ENCODE measurements at regions of chr12 and their contacts with region 1.

Region 1: DNA sequence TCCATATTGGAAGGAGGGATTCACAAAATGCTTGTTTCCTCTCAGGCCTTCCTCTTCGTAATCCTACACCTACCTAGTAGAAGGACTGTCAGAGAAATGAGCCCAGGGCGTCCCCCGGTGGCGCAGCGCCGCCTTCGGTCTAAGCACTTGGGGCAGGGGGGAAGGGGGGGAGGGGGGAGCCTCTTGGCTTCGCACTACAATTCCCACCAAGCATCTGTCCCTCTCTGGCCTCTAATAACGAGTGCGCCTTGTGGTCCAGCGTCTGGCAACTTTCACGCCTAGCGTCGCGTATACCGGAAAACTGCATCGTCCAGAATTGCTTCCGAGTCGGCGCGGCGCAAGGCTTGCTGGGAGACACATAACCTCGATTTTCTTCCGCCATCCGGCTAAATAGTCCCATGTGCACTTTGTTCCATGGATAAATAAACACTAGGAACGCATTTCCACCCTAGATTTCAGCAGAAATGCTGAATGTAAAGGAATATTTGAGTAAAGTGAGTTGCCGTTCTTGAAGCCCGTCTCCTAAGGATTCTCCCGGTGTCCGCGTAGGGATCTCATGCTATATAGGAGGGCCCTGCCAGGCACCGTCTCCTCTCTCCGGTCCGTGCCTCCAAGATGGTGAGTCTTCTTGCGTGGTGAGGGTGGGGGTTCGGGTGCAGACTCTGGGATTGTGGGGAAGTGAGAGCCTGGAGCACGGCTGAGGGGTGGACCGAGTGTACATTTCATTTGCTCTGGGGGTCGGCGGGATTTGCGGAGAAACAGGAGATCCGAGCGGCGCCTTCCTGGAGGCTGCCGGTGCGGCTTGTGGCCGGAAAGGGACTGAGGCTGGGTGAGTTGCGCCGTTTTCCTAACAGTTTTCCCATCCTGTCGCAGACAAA is at the start of gene RPS26:
- DNase-seq: peak; percentile 89 to 100 (median 92)
- ATAC-seq: peak; percentile 90
- H3K4me3 ChIP-seq: peak within 1 kb of the TSS; percentile 83
- H3K27ac ChIP-seq: peak within 1 kb of the TSS; percentile 98
- H3K4me1 ChIP-seq: peaks cover 13 to 25% of the 10 kb centered on the region in 2 experiments; a peak in 3 of 5 replicates
- H3K27me3 ChIP-seq: no peaks in the 10 kb centered on the region
- CTCF ChIP-seq: peak; percentile 42 to 82 (median 73)
- EP300 ChIP-seq: no peak
- POLR2A ChIP-seq: peak; percentile 100
- RAD21 ChIP-seq: peak; percentile 65 to 79
- polyA plus RNA-seq, gene RPS26: 1,319 to 1,589 TPM

Region 2: GRCh38 chr12:55694651-55695050 is 347.1 kb before region 1 on chr12:
- CTCF ChIA-PET with region 1: no interaction called
- POLR2A ChIA-PET with region 1: no interaction called
- in situ Hi-C with region 1: no loop called
- intact Hi-C with region 1: no loop called
- DNase-seq: no peak
- ATAC-seq: no peak
- H3K4me3 ChIP-seq: no peak overlapping the region
- H3K27ac ChIP-seq: no peak overlapping the region
- H3K4me1 ChIP-seq: peaks cover 0 to 11% of the 10 kb centered on the region in 2 experiments; a peak in 1 of 5 replicates
- H3K27me3 ChIP-seq: peaks cover 20 to 53% of the 10 kb centered on the region in 2 experiments; a peak in 4 of 5 replicates
- CTCF ChIP-seq: no peak
- EP300 ChIP-seq: no peak
- POLR2A ChIP-seq: no peak
- RAD21 ChIP-seq: no peak

Region 3: GRCh38 chr12:55829967-55830600 is 211.7 kb before region 1 on chr12:
- CTCF ChIA-PET with region 1: no interaction called
- POLR2A ChIA-PET with region 1: interaction called, 4 read pairs
- in situ Hi-C with region 1: no loop called
- intact Hi-C with region 1: loop called (anchors 5 kb)
- DNase-seq: peak; percentile 53 to 82 (median 70)
- ATAC-seq: peak; percentile 52
- H3K4me3 ChIP-seq: peak overlapping the region; percentile 78
- H3K27ac ChIP-seq: peak overlapping the region; percentile 83
- H3K4me1 ChIP-seq: peaks cover 28 to 42% of the 10 kb centered on the region in 2 experiments; a peak in 4 of 5 replicates
- H3K27me3 ChIP-seq: no peaks in the 10 kb centered on the region
- CTCF ChIP-seq: peak in 1 of 3 experiments; percentile 29; a peak in 2 of 6 replicates
- EP300 ChIP-seq: no peak
- POLR2A ChIP-seq: no peak
- RAD21 ChIP-seq: no peak; a peak in 1 of 4 replicates

Region 4: DNA sequence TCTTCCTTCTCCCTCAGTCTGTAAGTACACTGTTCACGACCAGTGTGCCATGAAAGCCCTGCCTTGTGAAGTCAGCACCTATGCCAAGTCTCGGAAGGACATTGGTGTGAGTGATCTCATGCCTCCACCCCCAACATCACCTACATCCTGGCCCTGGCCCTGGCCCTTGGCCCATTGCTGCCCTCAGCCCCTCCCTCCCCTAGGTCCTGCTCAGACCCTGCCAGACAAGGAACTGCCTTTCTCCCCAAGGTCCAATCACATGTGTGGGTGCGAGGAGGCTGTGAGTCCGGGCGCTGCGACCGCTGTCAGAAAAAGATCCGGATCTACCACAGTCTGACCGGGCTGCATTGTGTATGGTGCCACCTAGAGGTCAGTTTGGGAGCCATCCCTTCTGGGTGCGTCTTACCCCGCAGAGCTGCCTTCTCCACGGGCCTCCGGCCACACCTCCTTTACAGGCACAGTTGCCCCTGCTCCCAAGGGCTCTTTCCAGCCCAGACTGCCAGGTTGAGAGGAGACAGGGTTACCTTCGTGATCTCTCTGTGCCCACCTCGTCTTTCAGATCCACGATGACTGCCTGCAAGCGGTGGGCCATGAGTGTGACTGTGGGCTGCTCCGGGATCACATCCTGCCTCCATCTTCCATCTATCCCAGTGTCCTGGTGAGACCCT is 101.6 kb before region 1 on chr12:
- CTCF ChIA-PET with region 1: no interaction called
- POLR2A ChIA-PET with region 1: no interaction called
- in situ Hi-C with region 1: no loop called
- intact Hi-C with region 1: loop called (anchors 2 kb)
- DNase-seq: peak; percentile 87 to 92 (median 89)
- ATAC-seq: peak; percentile 99
- H3K4me3 ChIP-seq: no peak overlapping the region
- H3K27ac ChIP-seq: no peak overlapping the region
- H3K4me1 ChIP-seq: peaks cover 7 to 13% of the 10 kb centered on the region in 2 experiments; a peak in 4 of 5 replicates
- H3K27me3 ChIP-seq: no peaks in the 10 kb centered on the region; a peak in 1 of 5 replicates
- CTCF ChIP-seq: peak; percentile 89 to 97 (median 94)
- EP300 ChIP-seq: no peak
- POLR2A ChIP-seq: no peak
- RAD21 ChIP-seq: peak; percentile 75 to 88

Region 5: DNA sequence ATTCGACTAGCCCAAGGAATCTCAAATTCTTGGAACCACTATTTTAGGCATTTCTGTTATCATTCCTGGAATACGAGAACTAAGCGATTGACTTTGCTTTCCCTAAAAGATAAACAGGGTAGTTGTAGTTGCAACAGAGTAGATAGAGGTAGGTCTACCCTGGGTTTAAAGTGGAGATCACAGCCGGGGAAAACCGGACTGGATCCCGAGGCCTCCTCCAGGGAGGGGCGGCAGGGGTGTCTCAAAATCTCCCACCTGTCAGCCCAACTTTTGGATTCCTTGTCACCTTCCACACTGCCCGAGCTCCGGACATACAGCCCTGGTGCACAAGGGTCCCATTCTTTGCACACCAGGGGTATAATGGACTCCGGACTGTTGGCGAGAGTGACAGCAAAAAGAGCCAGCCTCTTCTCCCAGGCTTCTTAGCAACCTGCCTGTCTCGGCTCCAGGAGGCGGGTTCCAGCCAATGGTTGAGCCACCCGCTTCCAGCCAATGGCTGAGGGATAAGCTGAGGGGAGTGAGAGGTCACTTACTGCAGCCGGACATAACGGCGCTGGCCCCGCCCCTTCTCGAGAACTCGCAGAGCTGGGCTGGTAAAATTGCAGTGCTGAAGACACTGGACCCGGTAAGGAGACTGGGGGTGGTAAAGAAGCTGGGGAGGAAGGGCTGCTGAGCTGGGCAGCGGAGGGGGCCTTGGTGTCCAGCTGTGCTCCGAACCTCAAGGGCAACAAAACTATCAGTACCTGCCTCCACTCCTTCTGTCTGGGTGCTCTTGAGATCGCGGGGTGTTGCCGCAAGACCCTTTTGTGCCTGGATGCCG is 44.9 kb before region 1 on chr12 and contains the start of gene SUOX:
- CTCF ChIA-PET with region 1: interaction called, 20 read pairs
- POLR2A ChIA-PET with region 1: interaction called, 4 read pairs
- in situ Hi-C with region 1: no loop called
- intact Hi-C with region 1: loop called (anchors 1 kb)
- DNase-seq: peak; percentile 98 to 99 (median 99)
- ATAC-seq: peak; percentile 100
- H3K4me3 ChIP-seq: peak within 1 kb of the TSS; percentile 60
- H3K27ac ChIP-seq: peak within 1 kb of the TSS; percentile 77
- H3K4me1 ChIP-seq: peaks cover 3 to 19% of the 10 kb centered on the region in 2 experiments; a peak in 4 of 5 replicates
- H3K27me3 ChIP-seq: no peaks in the 10 kb centered on the region
- CTCF ChIP-seq: no peak
- EP300 ChIP-seq: peak; percentile 15
- POLR2A ChIP-seq: peak; percentile 83
- RAD21 ChIP-seq: no peak
- polyA plus RNA-seq, gene SUOX: 9.2 to 21.6 TPM

Region 6: DNA sequence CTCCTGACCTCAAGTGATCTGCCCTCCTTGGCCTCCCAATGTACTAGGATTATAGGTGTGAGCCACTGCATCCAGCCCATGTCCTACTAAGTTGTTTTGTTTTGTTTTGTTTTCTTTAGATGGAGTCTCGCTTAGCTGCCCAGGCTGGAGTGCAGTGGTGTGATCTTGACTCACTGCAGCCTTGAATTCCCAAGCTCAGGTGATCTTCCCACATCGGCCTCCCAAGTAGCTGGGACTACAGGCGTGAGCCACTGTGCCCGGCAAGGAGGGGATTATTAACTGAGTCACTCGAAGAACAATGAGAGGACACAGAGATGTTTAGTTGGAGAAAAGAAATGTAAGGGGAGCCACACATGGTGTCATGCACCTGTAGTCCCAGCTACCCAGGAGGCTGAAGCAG is 20.2 kb after region 1 on chr12:
- CTCF ChIA-PET with region 1: no interaction called
- POLR2A ChIA-PET with region 1: interaction called, 21 read pairs
- in situ Hi-C with region 1: no loop called
- intact Hi-C with region 1: no loop called
- DNase-seq: no peak
- ATAC-seq: no peak
- H3K4me3 ChIP-seq: no peak overlapping the region
- H3K27ac ChIP-seq: no peak overlapping the region
- H3K4me1 ChIP-seq: no peaks in the 10 kb centered on the region; a peak in 1 of 5 replicates
- H3K27me3 ChIP-seq: no peaks in the 10 kb centered on the region
- CTCF ChIP-seq: no peak
- EP300 ChIP-seq: no peak
- POLR2A ChIP-seq: no peak
- RAD21 ChIP-seq: no peak

Region 7: GRCh38 chr12:56366948-56367347 is 325.2 kb after region 1 on chr12:
- CTCF ChIA-PET with region 1: no interaction called
- POLR2A ChIA-PET with region 1: no interaction called
- in situ Hi-C with region 1: no loop called
- intact Hi-C with region 1: no loop called
- DNase-seq: no peak
- ATAC-seq: peak; percentile 55
- H3K4me3 ChIP-seq: no peak overlapping the region
- H3K27ac ChIP-seq: no peak overlapping the region
- H3K4me1 ChIP-seq: peaks cover 0 to under 1% of the 10 kb centered on the region in 2 experiments; a peak in 1 of 5 replicates
- H3K27me3 ChIP-seq: no peaks in the 10 kb centered on the region
- CTCF ChIP-seq: no peak
- EP300 ChIP-seq: no peak
- POLR2A ChIP-seq: no peak
- RAD21 ChIP-seq: no peak